ENCODE measurements at regions of chr10 and their contacts with region 1.

Region 1: GRCh38 chr10:128011175-128011979 is 104.5 kb downstream of the PTPRE start:
- DNase-seq: peak; percentile 90
- ATAC-seq: peak; percentile 99
- H3K4me3 ChIP-seq: no peak overlapping the region
- H3K4me3 Mint-ChIP-seq: peak overlapping the region; percentile 58
- H3K27ac ChIP-seq: no peak overlapping the region
- H3K27ac Mint-ChIP-seq: peak overlapping the region; percentile 54
- H3K4me1 ChIP-seq: peaks cover 4 to 10% of the 10 kb centered on the region in 2 donors
- H3K4me1 Mint-ChIP-seq: peaks cover 10% of the 10 kb centered on the region
- H3K27me3 ChIP-seq: peaks cover 0 to 14% (median 0%) of the 10 kb centered on the region in 4 experiments
- H3K27me3 Mint-ChIP-seq: peaks cover 28% of the 10 kb centered on the region
- CTCF ChIP-seq: peak; percentile 97

Region 2: GRCh38 chr10:127715782-127716378 is 295.5 kb before region 1 on chr10:
- CTCF ChIA-PET with region 1: interaction called, 35 read pairs
- POLR2A ChIA-PET with region 1: no interaction called
- intact Hi-C with region 1: no loop called
- DNase-seq: peak; percentile 47
- ATAC-seq: no peak
- H3K4me3 ChIP-seq: no peak overlapping the region
- H3K4me3 Mint-ChIP-seq: no peak overlapping the region
- H3K27ac ChIP-seq: no peak overlapping the region
- H3K27ac Mint-ChIP-seq: no peak overlapping the region
- H3K4me1 ChIP-seq: no peaks in the 10 kb centered on the region
- H3K4me1 Mint-ChIP-seq: no peaks in the 10 kb centered on the region
- H3K27me3 ChIP-seq: no peaks in the 10 kb centered on the region
- H3K27me3 Mint-ChIP-seq: peaks cover 15% of the 10 kb centered on the region
- CTCF ChIP-seq: peak; percentile 58

Region 3: DNA sequence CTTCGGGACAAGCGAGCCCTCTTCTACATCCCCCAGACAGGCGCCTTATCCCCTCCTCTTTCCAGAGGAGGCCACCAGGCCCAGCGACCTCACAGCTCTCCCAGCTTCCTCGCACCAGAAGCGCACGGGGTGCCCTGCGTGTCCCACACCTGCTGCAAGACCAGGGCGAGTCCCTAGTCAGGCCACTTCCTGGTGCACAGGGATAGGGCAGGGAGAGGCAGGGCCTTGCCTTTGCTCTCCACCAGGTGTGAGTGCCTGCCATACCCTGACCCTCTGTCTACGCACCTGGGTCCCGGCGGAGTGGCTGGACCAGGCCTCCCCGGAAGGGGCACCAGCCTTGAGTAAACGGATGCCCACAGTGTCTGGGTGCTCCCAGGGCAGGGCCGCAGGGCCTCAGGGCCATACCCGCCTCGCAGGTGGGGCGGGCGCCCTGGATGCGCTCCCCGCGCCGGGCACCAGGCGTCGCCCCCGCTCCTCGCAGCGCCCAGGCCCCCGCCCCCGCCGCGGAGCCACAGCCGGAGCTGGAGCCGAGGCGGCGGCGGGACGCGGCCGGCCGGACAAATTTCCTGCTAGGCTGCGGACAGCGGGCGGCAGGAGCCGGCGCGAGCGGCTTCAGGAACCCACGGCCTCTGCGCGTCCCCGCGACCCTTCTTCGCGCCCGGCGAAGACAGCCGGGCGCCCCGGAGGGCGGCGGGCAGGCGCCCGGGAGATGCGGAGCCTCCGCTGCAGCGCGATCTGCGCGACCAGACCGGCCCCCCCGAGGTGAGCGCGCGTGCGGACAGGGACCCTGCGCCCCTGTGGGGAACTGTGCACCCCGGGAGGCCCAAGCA is 104.6 kb before region 1 on chr10 and contains the start of gene PTPRE:
- CTCF ChIA-PET with region 1: interaction called, 35 read pairs
- POLR2A ChIA-PET with region 1: no interaction called
- intact Hi-C with region 1: no loop called
- DNase-seq: peak; percentile 78
- ATAC-seq: peak; percentile 95
- H3K4me3 ChIP-seq: peak within 1 kb of the TSS in 3 of 5 experiments; percentile 42 to 62 (median 49)
- H3K4me3 Mint-ChIP-seq: peak within 1 kb of the TSS; percentile 49
- H3K27ac ChIP-seq: no peak within 1 kb of the TSS
- H3K27ac Mint-ChIP-seq: no peak within 1 kb of the TSS
- H3K4me1 ChIP-seq: peaks cover 8 to 9% of the 10 kb centered on the region in 2 donors
- H3K4me1 Mint-ChIP-seq: no peaks in the 10 kb centered on the region
- H3K27me3 ChIP-seq: peaks cover 0 to 30% (median 12%) of the 10 kb centered on the region in 4 experiments
- H3K27me3 Mint-ChIP-seq: peaks cover 57% of the 10 kb centered on the region
- CTCF ChIP-seq: peak; percentile 74
- total RNA-seq, gene PTPRE: 31.5 and 32.7 TPM in 2 replicates

Measured in B cell (primary cell).